Ascending aorta (tissue), 2 donors: ENCODE measurements at regions of chr7 and their contacts with region 1.

Region 1: DNA sequence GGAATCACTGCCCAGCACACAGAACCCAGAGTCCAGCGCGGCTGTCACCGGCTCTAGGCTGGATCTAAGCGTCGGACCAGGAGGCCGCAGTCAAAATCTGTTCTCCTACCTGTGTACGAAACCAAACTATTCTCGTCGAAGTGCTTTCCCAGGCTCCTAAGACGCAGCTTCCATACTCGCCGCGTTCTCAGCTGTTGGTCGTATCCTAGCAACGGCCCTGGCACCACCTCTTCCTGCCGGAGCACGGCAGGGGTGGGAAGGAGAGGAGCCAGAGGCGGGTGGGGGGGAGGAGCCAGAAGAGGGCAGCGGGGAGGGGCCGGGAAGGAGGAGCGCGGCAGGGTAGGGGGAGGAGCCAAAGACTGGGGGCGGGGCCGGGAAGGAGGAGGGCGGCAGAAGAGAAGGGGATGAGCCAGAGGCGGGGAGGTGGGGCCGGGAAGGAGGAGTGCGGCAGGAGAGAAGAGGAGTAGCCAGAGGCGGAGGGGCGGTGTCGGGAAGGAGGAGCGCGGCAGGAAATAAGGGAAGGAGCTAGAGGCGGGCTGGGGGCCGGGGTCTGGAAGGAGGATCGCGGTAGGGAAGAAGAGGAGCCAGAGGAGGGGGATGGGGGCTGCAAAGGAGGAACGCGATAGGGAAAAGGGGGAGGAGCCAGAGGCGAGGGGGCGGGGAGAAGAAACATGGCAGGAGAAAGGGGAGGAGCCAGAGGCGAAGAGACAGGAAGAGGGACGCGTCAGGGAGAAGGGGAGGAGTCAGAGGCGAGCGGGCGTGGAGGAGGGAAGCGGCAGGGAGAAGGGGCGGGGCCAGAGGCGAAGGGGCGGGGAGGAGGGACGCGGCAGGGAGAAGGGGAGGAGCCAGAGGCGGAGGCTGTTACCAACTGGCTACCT is at the start of gene IQUB:
- DNase-seq: peak; percentile 84 to 99
- H3K4me3 ChIP-seq: peak within 1 kb of the TSS; percentile 66 to 68
- H3K27ac ChIP-seq: peak within 1 kb of the TSS; percentile 84 to 85
- H3K4me1 ChIP-seq: peaks cover 0 to 6% of the 10 kb centered on the region in 2 donors
- H3K27me3 ChIP-seq: no peaks in the 10 kb centered on the region
- CTCF ChIP-seq: no peak
- total RNA-seq, gene IQUB: not detected

Region 2: DNA sequence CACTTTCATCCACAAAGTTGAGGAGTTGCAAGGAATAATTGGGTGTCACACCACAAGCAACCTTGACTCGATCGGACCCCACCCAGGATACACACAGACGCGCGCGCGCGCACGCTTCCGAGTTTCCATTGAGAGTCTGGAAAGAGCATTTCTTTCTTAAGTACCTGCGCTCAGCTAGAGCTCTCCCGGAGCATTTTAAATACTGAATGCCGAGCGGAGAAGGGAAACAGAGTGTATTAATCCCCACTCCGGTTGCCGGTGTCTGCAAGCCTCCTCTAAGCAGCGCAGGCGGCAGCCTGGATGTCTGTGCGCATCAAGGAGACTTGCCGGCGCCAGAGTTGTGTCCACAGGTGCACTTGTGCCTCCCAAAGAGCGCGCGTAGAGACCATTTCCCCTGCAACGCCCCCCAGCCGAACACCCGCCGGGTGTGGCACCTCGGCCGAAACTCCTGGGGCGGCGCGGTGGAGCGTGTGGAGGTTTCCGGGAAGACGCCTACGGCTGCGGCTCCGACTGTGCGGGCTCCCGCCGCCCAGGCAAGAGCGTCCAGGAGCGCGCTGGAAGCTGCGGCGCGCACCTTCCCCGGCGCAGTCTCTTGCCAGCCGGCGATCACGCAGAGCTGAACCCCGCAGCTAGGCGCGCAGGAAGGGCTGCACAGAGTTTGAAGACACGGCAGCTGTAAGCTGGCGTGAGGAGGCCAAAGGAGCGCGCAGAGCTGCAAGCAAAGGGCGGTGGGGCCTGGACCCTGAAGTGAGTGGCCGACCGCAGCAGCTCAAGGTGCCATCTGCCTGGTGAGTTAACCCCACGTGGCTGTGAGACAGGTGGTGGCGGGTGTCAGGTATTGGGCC is 1228.9 kb before region 1 on chr7:
- intact Hi-C with region 1: loop called (anchors 10 kb)
- DNase-seq: peak in 1 of 2 donors; percentile 63
- H3K4me3 ChIP-seq: peak overlapping the region; percentile 42 to 49
- H3K27ac ChIP-seq: no peak overlapping the region
- H3K4me1 ChIP-seq: peaks cover 10 to 20% of the 10 kb centered on the region in 2 donors
- H3K27me3 ChIP-seq: peaks cover 32% of the 10 kb centered on the region
- CTCF ChIP-seq: no peak

Region 3: DNA sequence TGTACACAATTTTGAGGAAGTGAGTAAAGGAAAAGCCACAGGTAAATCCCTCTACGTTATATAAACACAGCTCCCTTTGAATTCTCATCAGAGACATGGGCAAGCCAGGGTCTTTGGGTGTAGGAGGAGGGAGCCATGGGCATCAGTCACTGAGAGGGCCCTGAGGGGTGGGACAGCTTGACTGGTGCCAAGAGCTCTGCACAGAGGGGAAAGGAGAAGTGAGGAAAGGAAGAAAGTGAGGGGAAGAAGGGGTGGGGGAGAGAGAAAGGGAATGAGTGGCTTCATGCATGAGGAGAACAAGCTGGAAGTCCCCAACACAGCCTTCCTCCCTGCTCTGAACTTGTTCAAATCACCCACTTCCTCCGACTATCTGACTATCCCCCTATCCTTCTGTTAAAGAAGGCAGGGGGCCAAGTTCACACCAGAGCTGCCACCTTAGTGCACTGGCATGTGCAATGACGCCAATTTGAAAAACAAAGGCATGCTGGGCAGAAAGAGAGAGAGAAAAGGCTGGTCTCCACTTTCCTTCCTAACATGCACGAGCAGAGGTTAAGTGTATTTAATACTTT is 815.5 kb before region 1 on chr7:
- intact Hi-C with region 1: no loop called
- DNase-seq: no peak
- H3K4me3 ChIP-seq: no peak overlapping the region
- H3K27ac ChIP-seq: no peak overlapping the region
- H3K4me1 ChIP-seq: no peaks in the 10 kb centered on the region
- H3K27me3 ChIP-seq: no peaks in the 10 kb centered on the region
- CTCF ChIP-seq: no peak

Region 4: DNA sequence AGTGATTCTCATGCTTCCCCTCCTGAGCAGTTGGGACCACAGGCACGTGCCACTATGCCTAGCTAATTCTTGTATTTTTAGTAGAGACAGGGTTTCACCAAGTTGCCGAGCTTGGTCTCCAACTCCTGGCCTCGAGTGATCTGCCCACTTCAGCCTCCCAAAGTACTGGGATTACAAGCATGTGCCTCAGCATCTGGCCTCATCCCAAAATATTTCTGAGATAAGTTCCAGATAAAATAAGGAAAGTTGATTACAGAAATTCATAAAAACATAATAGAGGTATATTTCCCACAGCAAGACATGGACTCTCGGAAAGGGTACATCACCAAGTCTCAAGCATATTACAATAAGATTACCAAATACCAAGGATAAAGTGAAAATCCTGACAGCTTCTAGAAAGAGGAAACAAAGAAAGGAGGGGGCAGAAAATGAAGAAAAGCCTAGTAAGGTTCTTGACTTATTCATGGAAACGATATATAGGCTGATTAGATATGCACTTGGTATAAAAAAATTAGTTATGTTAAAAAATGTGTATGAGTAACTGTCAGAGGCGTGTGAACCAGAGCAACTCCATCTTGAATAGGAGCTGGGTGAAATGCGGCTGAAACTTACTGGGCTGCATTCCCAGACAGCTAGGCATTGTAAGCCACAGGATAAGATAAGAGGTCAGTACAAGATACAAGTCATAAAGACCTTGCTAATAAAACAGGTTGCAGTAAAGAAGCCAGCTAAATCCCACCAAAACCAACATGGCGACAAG is 35.2 kb before region 1 on chr7:
- intact Hi-C with region 1: loop called (anchors 5 kb)
- DNase-seq: no peak
- H3K4me3 ChIP-seq: no peak overlapping the region
- H3K27ac ChIP-seq: no peak overlapping the region
- H3K4me1 ChIP-seq: peaks cover 2 to 3% of the 10 kb centered on the region in 2 donors
- H3K27me3 ChIP-seq: no peaks in the 10 kb centered on the region
- CTCF ChIP-seq: no peak

Region 5: DNA sequence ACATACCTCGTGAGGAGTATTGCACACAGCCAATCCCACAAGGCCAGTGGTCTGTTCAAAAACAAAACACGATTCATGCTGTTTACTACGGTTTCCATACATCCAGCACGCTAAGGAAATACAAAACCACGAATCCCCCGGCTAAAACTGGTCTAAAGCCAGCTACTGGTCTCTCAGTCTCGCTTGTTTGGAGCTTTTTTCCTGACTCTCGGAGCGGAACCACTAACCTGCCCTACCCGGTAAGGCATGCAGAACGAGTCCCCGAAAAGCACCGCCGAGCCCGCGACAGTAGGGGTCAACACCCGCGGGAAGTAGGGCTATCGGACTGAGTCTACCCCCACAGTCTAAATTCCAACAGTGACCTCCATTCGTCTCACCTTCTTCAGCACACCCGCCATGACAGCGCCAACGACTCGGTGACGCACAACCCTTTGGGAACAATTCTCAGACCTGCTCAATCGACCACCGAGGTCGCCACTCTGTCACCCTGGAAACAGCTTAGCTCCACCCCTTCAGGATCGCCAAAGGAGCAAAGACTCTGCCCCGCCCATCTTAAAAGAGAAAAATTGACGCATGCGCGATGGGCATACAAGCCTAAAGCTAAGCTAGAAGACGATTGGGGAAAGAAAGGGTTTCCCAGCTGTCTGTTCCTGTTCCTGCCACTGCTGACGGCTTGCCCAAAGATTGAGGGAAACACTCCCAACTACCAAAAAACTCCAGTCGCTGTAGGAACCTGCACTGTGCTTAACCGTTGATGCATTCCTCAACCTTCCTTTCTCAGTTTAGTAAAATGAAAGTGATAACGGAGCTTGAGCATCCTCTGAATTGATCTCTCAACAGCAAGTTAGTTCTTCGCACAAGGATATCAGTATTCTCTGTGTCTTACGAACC is 23.0 kb after region 1 on chr7 and contains the start of gene NDUFA5:
- intact Hi-C with region 1: loop called (anchors 1 kb)
- DNase-seq: peak; percentile 94 to 99
- H3K4me3 ChIP-seq: peak within 1 kb of the TSS; percentile 81 to 86
- H3K27ac ChIP-seq: peak within 1 kb of the TSS; percentile 77 to 85
- H3K4me1 ChIP-seq: peaks cover 0 to 12% of the 10 kb centered on the region in 2 donors
- H3K27me3 ChIP-seq: no peaks in the 10 kb centered on the region
- CTCF ChIP-seq: no peak
- total RNA-seq, gene NDUFA5: 20.1 TPM